ENCODE measurements at regions of chr9 and their contacts with region 1.

Region 1: DNA sequence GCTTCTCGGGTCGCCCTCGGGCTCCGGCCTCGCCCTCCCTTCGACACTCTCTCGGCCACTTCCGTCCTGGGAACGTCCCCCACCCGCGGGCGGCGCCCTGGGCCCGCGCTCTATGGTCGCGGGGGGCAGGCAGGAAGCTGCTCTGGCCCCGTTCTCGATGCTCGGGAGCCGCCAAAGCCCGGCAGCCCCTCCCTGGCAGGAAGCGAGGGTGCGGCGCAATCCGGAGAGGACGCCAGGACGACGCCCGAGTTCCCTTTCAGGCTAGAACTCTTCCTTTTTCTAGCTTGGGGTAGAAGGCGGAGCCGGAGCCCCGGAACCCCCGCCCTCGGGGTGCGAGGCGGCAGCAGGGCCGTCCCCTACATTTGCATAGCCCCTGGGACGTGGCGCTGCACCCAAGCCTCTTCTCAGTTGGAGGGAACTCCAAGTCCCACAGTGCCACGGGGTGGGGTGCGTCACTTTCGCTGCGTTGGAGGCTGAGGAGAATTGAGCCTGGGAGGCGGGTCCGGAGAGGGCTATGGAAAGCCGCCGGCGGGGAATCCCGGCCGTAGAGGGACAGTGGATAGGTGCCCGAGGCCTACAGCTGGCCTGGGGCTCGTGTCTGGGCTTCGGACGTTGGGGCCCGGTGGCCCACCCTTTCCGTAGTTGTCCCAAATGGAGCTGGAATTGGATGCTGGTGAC is at the starts of genes CREB3 and TLN1:
- DNase-seq: peak; percentile 86 to 98 (median 96)
- ATAC-seq: peak; percentile 94
- H3K4me3 ChIP-seq: peak within 1 kb of the TSS; percentile 98
- H3K4me3 Mint-ChIP-seq: peak within 1 kb of the TSS in 5 of 10 donors; percentile 87 to 97 (median 94)
- H3K27ac ChIP-seq: peak within 1 kb of the TSS; percentile 93
- H3K27ac Mint-ChIP-seq: peak within 1 kb of the TSS in 6 of 9 donors; percentile 80 to 96 (median 92)
- H3K4me1 ChIP-seq: peaks cover 56 to 60% of the 10 kb centered on the region in 2 donors
- H3K4me1 Mint-ChIP-seq: peaks cover 20 to 34% (median 22%) of the 10 kb centered on the region in 7 donors
- H3K27me3 ChIP-seq: no peaks in the 10 kb centered on the region
- H3K27me3 Mint-ChIP-seq: no peaks in the 10 kb centered on the region
- total RNA-seq, gene CREB3: 13.4 to 22.1 (median 20.9) TPM
- total RNA-seq, gene TLN1: 191 to 369 (median 241) TPM

Region 2: DNA sequence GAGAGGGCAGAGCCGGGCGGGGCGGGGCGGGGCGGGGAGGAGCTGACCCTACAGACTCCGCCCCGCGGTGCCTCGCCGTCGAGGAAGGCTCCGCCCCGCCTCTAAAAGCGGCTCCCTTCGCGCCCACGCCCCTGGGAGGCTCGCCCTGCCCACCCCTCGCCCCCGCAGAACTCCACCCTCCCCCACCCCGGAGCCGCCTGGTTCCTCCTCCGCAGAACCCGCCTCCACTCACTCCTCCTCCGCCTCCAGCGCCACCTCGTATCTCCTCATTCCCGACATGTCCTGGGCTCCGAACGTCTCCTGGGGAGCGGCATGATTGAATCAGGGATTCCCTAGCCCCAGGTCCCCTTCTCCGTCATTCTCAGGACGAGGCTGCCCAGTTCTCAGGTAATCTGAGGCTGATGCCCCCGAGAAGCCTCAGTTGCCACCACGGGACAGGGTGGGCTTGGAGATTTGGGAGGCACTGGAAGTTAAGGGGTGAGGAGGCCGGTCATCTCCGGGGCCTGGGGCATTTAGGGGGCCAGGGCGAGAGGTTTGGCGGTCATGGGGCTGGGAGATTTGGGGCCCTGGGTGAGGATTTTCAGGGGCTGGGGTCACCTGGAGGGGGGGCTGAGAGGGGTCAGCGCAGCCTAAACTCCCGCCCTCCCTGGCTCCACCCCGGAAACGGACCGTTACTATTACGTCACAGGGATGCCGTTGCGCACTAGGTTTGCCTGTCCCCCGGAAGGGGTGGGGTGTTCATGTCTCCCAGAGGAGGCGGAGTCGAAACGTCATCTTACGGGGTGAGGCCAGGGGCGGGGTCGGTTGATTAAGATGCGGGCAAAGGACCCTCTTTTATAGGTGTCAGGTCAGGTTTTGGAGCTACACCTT is 1066.6 kb before region 1 on chr9:
- CTCF ChIA-PET with region 1: no interaction called
- POLR2A ChIA-PET with region 1: no interaction called
- intact Hi-C with region 1: loop called (anchors 2 to 10 kb)
- DNase-seq: peak; percentile 74 to 90 (median 84)
- ATAC-seq: peak; percentile 90
- H3K4me3 ChIP-seq: peak overlapping the region; percentile 99
- H3K4me3 Mint-ChIP-seq: peak overlapping the region; percentile 89 to 97 (median 94)
- H3K27ac ChIP-seq: peak overlapping the region; percentile 98
- H3K27ac Mint-ChIP-seq: peak overlapping the region; percentile 86 to 98 (median 97)
- H3K4me1 ChIP-seq: peaks cover 33 to 40% of the 10 kb centered on the region in 2 donors
- H3K4me1 Mint-ChIP-seq: peaks cover 37 to 58% (median 50%) of the 10 kb centered on the region in 7 donors
- H3K27me3 ChIP-seq: no peaks in the 10 kb centered on the region
- H3K27me3 Mint-ChIP-seq: no peaks in the 10 kb centered on the region

Region 3: DNA sequence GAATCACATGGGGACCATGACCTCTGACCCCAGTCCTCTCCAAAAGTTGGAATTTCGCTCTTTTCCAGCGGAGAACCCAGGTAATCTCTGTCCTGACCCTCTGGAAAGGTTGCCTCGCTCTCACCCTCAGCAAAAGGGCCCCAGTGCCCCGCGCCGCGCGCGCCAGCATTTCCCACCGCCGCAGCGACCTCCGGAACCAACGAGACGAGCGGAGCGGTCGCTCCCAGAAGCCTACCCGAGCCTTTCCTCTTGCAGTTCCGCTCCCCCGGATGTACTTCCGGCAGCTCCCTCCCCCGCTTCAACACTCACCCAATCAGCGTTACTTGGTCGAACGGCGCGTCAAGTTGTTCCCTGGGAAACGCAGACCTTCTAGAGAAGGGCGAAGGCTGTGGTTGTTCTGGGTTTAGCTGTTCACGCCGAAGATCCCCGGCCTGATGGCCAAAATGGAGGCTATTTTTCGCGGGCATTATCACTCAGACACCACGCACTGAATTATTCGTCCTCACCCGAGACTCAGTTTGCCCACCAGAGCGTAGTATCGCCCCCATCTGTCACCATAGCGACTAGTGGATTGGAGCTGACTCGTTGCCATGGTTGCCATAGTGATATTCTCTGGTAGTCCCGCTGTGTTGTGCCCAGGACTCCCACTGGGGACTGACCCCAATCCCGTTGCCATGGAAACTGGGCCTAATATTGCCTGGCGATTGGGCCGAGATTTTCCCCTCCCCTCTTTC is 629.2 kb before region 1 on chr9 and contains the start of gene STOML2:
- CTCF ChIA-PET with region 1: no interaction called
- POLR2A ChIA-PET with region 1: no interaction called
- intact Hi-C with region 1: loop called in 1 of 2 experiments (anchors 1 kb)
- DNase-seq: peak; percentile 72 to 95 (median 91)
- ATAC-seq: peak; percentile 98
- H3K4me3 ChIP-seq: peak within 1 kb of the TSS; percentile 92
- H3K4me3 Mint-ChIP-seq: peak within 1 kb of the TSS; percentile 88 to 98 (median 92)
- H3K27ac ChIP-seq: peak within 1 kb of the TSS; percentile 81
- H3K27ac Mint-ChIP-seq: peak within 1 kb of the TSS; percentile 92 to 99 (median 96)
- H3K4me1 ChIP-seq: peaks cover 12 to 18% of the 10 kb centered on the region in 2 donors
- H3K4me1 Mint-ChIP-seq: peaks cover 18 to 36% (median 33%) of the 10 kb centered on the region in 7 donors
- H3K27me3 ChIP-seq: no peaks in the 10 kb centered on the region
- H3K27me3 Mint-ChIP-seq: no peaks in the 10 kb centered on the region
- total RNA-seq, gene STOML2: 34.7 to 126 (median 44.9) TPM

Region 4: GRCh38 chr9:35611230-35611797 is 120.9 kb before region 1 on chr9:
- CTCF ChIA-PET with region 1: interaction called, 15 read pairs
- POLR2A ChIA-PET with region 1: interaction called, 7 read pairs
- intact Hi-C with region 1: loop called in 1 of 2 experiments (anchors 1 kb)
- DNase-seq: peak in 6 of 9 donors; percentile 36 to 55 (median 45)
- ATAC-seq: peak; percentile 90
- H3K4me3 ChIP-seq: no peak overlapping the region
- H3K4me3 Mint-ChIP-seq: peak overlapping the region in 1 of 10 donors; percentile 6
- H3K27ac ChIP-seq: no peak overlapping the region
- H3K27ac Mint-ChIP-seq: peak overlapping the region in 3 of 9 donors; percentile 35 to 69 (median 39)
- H3K4me1 ChIP-seq: peaks cover 15 to 17% of the 10 kb centered on the region in 2 donors
- H3K4me1 Mint-ChIP-seq: peaks cover 18 to 32% (median 24%) of the 10 kb centered on the region in 7 donors
- H3K27me3 ChIP-seq: no peaks in the 10 kb centered on the region
- H3K27me3 Mint-ChIP-seq: no peaks in the 10 kb centered on the region

Region 5: GRCh38 chr9:35657546-35658136 is 74.6 kb before region 1 on chr9 and contains the start of gene RMRP:
- CTCF ChIA-PET with region 1: interaction called, 16 read pairs
- POLR2A ChIA-PET with region 1: interaction called, 39 read pairs
- intact Hi-C with region 1: loop called (anchors 1 kb)
- DNase-seq: peak; percentile 67 to 93 (median 91)
- ATAC-seq: peak; percentile 87
- H3K4me3 ChIP-seq: peak within 1 kb of the TSS; percentile 94
- H3K4me3 Mint-ChIP-seq: peak within 1 kb of the TSS; percentile 78 to 95 (median 90)
- H3K27ac ChIP-seq: peak within 1 kb of the TSS; percentile 99
- H3K27ac Mint-ChIP-seq: peak within 1 kb of the TSS; percentile 97 to 100 (median 100)
- H3K4me1 ChIP-seq: peaks cover 35 to 48% of the 10 kb centered on the region in 2 donors
- H3K4me1 Mint-ChIP-seq: peaks cover 42 to 78% (median 69%) of the 10 kb centered on the region in 7 donors
- H3K27me3 ChIP-seq: no peaks in the 10 kb centered on the region
- H3K27me3 Mint-ChIP-seq: peaks cover 0 to 6% (median 0%) of the 10 kb centered on the region in 5 donors
- total RNA-seq, gene RMRP: 5,750 to 11,273 (median 9,225) TPM

Region 6: GRCh38 chr9:35680331-35681105 is 51.7 kb before region 1 on chr9:
- CTCF ChIA-PET with region 1: no interaction called
- POLR2A ChIA-PET with region 1: no interaction called
- intact Hi-C with region 1: no loop called
- DNase-seq: no peak
- ATAC-seq: no peak
- H3K4me3 ChIP-seq: no peak overlapping the region
- H3K4me3 Mint-ChIP-seq: no peak overlapping the region
- H3K27ac ChIP-seq: no peak overlapping the region
- H3K27ac Mint-ChIP-seq: no peak overlapping the region
- H3K4me1 ChIP-seq: peaks cover 0 to 6% of the 10 kb centered on the region in 2 donors
- H3K4me1 Mint-ChIP-seq: peaks cover 5 to 12% (median 9%) of the 10 kb centered on the region in 7 donors
- H3K27me3 ChIP-seq: no peaks in the 10 kb centered on the region
- H3K27me3 Mint-ChIP-seq: peaks cover 0 to 16% (median 3%) of the 10 kb centered on the region in 5 donors

Region 7: GRCh38 chr9:35756275-35757225 is 24.3 kb after region 1 on chr9:
- CTCF ChIA-PET with region 1: interaction called, 12 read pairs
- POLR2A ChIA-PET with region 1: interaction called, 13 read pairs
- intact Hi-C with region 1: loop called (anchors 1 kb)
- DNase-seq: peak; percentile 58 to 80 (median 75)
- ATAC-seq: peak; percentile 95
- H3K4me3 ChIP-seq: peak overlapping the region; percentile 92
- H3K4me3 Mint-ChIP-seq: peak overlapping the region; percentile 89 to 100 (median 96)
- H3K27ac ChIP-seq: peak overlapping the region; percentile 82
- H3K27ac Mint-ChIP-seq: peak overlapping the region; percentile 88 to 99 (median 94)
- H3K4me1 ChIP-seq: peaks cover 6 to 9% of the 10 kb centered on the region in 2 donors
- H3K4me1 Mint-ChIP-seq: peaks cover 34 to 61% (median 52%) of the 10 kb centered on the region in 7 donors
- H3K27me3 ChIP-seq: no peaks in the 10 kb centered on the region
- H3K27me3 Mint-ChIP-seq: no peaks in the 10 kb centered on the region

Region 8: DNA sequence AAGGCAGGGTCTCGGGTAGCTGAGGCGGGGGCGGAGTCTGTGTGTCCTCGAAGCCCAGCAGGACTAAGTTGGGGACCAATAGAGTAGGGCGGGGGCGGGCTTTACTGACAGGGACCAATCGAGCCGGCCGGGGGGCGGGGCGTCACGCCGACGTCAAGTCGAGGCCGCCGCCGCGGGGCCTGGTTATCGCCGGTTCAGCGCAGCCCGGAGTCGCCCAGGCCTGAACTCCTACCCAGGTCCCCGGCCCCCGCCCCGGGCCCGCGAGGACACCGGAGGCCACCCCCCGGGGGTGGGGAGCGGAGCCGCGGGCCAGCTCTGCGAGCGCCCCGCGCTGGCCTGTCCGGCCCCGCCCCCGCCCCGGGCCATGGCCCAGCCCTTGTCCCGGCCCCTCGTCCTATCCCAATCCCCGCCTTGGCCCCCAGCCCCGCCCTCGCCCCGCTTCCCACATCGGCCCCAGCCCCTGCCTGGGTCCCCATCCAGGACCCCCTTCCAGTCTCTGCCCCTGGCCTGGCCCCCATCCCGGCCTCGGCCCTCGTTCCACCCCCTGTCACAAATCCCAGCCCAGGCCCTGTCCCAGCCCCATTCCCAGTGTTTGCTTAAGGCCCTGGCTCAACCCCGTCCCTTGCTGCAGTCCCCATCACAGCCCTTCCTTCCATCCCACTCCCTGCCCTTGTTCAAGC is 97.0 kb after region 1 on chr9 and contains the start of gene TMEM8B:
- CTCF ChIA-PET with region 1: interaction called, 6 read pairs
- POLR2A ChIA-PET with region 1: interaction called, 3 read pairs
- intact Hi-C with region 1: loop called in 1 of 2 experiments (anchors 1 kb)
- DNase-seq: peak; percentile 80 to 95 (median 88)
- ATAC-seq: peak; percentile 95
- H3K4me3 ChIP-seq: peak within 1 kb of the TSS; percentile 88
- H3K4me3 Mint-ChIP-seq: peak within 1 kb of the TSS; percentile 84 to 100 (median 94)
- H3K27ac ChIP-seq: peak within 1 kb of the TSS; percentile 94
- H3K27ac Mint-ChIP-seq: peak within 1 kb of the TSS; percentile 91 to 99 (median 94)
- H3K4me1 ChIP-seq: peaks cover 4 to 14% of the 10 kb centered on the region in 2 donors
- H3K4me1 Mint-ChIP-seq: peaks cover 25 to 48% (median 43%) of the 10 kb centered on the region in 7 donors
- H3K27me3 ChIP-seq: no peaks in the 10 kb centered on the region
- H3K27me3 Mint-ChIP-seq: peaks cover 0 to 5% (median 0%) of the 10 kb centered on the region in 5 donors
- total RNA-seq, gene TMEM8B: 3.9 to 11.6 (median 10.6) TPM

Region 9: DNA sequence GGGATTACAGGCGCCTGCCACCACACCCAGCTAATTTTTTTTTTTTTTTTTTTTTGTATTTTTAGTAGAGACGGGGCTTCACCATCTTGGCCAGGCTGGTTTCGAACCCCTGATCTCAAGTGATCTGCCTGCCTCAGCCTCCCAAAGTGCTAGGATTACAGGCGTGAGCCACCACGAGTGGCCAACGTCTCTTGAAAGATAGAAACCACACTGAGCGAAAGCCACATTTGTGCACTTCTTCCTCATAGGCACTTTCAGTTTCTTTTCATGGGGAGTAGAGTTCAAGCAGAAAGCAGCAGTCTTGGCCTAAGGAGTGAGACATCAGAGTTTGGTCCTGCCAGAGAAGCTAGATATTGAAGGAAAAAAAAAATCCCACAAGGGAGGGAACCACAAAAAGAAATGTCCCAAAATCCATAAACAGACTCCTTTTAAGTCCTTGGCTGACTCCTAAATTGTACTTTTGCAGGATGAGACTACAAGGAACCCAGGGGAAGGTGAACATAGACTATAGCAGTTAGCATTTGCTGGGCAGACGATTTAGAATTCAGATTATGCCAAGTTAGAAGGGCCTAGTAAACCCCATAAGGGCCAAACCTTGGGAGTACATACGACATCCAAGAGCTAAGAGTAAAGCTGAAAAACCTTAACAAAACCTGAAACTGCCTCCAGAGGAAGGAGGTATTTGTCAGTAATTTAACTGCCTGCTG is 360.4 kb after region 1 on chr9:
- CTCF ChIA-PET with region 1: no interaction called
- POLR2A ChIA-PET with region 1: no interaction called
- intact Hi-C with region 1: no loop called
- DNase-seq: peak in 8 of 9 donors; percentile 14 to 58 (median 34)
- ATAC-seq: peak; percentile 90
- H3K4me3 ChIP-seq: peak overlapping the region; percentile 1
- H3K4me3 Mint-ChIP-seq: peak overlapping the region; percentile 50 to 83 (median 73)
- H3K27ac ChIP-seq: peak overlapping the region; percentile 38
- H3K27ac Mint-ChIP-seq: peak overlapping the region; percentile 35 to 95 (median 87)
- H3K4me1 ChIP-seq: peaks cover 0 to 5% of the 10 kb centered on the region in 2 donors
- H3K4me1 Mint-ChIP-seq: peaks cover 15 to 21% (median 17%) of the 10 kb centered on the region in 7 donors
- H3K27me3 ChIP-seq: no peaks in the 10 kb centered on the region
- H3K27me3 Mint-ChIP-seq: no peaks in the 10 kb centered on the region

Measured in naive thymus-derived CD4-positive, alpha-beta T cell (primary cell).